Activated B cell treated with CpG ODN at 0.5 μM for 24 hours (primary cell): ENCODE measurements at regions of chr3 and their contacts with region 1.

Region 1: GRCh38 chr3:194315088-194315964 is 35.8 kb downstream of the CPN2 start:
- DNase-seq: peak; percentile 86
- ATAC-seq: peak; percentile 88
- H3K4me3 Mint-ChIP-seq: peak overlapping the region; percentile 77
- H3K27ac Mint-ChIP-seq: no peak overlapping the region
- H3K4me1 Mint-ChIP-seq: peaks cover 28% of the 10 kb centered on the region
- H3K27me3 Mint-ChIP-seq: peaks cover 25% of the 10 kb centered on the region
- CTCF ChIP-seq: peak; percentile 96

Region 2: GRCh38 chr3:193665370-193665989 is 649.8 kb before region 1 on chr3:
- CTCF ChIA-PET with region 1: interaction called, 132 read pairs
- POLR2A ChIA-PET with region 1: interaction called, 4 read pairs
- intact Hi-C with region 1: loop called (anchors 1 kb)
- DNase-seq: no peak
- ATAC-seq: no peak
- H3K4me3 Mint-ChIP-seq: no peak overlapping the region
- H3K27ac Mint-ChIP-seq: no peak overlapping the region
- H3K4me1 Mint-ChIP-seq: peaks cover 6% of the 10 kb centered on the region
- H3K27me3 Mint-ChIP-seq: no peaks in the 10 kb centered on the region
- CTCF ChIP-seq: peak; percentile 95

Region 3: GRCh38 chr3:193780810-193781472 is 534.4 kb before region 1 on chr3:
- CTCF ChIA-PET with region 1: interaction called, 97 read pairs
- POLR2A ChIA-PET with region 1: no interaction called
- intact Hi-C with region 1: loop called (anchors 1 kb)
- DNase-seq: no peak
- ATAC-seq: peak; percentile 42
- H3K4me3 Mint-ChIP-seq: no peak overlapping the region
- H3K27ac Mint-ChIP-seq: no peak overlapping the region
- H3K4me1 Mint-ChIP-seq: peaks cover 13% of the 10 kb centered on the region
- H3K27me3 Mint-ChIP-seq: peaks cover 34% of the 10 kb centered on the region
- CTCF ChIP-seq: no peak

Region 4: GRCh38 chr3:193788189-193788991 is 526.9 kb before region 1 on chr3:
- CTCF ChIA-PET with region 1: interaction called, 57 read pairs
- POLR2A ChIA-PET with region 1: interaction called, 5 read pairs
- intact Hi-C with region 1: loop called (anchors 1 kb)
- DNase-seq: peak; percentile 36
- ATAC-seq: peak; percentile 98
- H3K4me3 Mint-ChIP-seq: no peak overlapping the region
- H3K27ac Mint-ChIP-seq: peak overlapping the region; percentile 15
- H3K4me1 Mint-ChIP-seq: peaks cover 16% of the 10 kb centered on the region
- H3K27me3 Mint-ChIP-seq: peaks cover 25% of the 10 kb centered on the region
- CTCF ChIP-seq: peak; percentile 34

Region 5: GRCh38 chr3:193883551-193883950 is 431.8 kb before region 1 on chr3:
- CTCF ChIA-PET with region 1: no interaction called
- POLR2A ChIA-PET with region 1: no interaction called
- intact Hi-C with region 1: no loop called
- DNase-seq: no peak
- ATAC-seq: no peak
- H3K4me3 Mint-ChIP-seq: no peak overlapping the region
- H3K27ac Mint-ChIP-seq: no peak overlapping the region
- H3K4me1 Mint-ChIP-seq: peaks cover 16% of the 10 kb centered on the region
- H3K27me3 Mint-ChIP-seq: no peaks in the 10 kb centered on the region
- CTCF ChIP-seq: no peak

Region 6: DNA sequence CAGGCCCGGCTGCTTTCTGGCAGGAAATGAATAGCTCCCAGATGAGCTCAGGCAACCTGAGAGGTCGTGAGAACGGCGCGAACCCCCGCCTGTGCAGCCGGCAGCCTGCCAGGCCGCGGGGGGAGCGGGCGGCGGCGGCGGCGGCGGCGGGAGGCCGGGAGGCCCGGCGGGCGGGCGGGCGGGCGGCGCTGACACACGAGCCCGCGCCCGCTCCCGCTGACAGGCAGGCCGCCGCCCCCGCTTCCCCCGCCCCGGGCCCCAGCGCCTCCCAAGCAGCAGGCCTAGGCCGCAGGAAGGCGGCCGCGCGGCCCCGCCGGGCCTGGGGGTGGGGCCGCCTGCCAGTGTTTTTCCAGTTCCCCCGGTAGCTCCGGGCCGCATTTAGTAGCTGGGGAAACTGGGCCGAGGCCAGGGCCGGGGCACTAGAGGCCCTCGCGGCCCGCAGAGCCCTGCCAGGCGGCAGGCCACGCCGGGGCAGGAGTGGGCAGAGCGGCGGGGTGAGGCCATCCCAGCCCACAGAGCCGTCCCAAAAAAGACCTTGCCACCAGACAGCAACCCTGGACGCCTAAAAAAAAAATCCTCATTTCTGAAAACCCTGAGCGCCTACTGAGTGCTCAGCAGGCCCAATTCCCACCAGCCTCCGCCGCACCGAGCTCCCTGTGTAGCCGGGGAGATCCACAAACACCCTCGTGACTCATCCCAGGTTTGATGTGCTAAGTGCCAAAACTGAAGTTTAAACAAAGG is 173.7 kb before region 1 on chr3:
- CTCF ChIA-PET with region 1: interaction called, 77 read pairs
- POLR2A ChIA-PET with region 1: interaction called, 4 read pairs
- intact Hi-C with region 1: loop called (anchors 1 kb)
- DNase-seq: peak; percentile 50
- ATAC-seq: peak; percentile 27
- H3K4me3 Mint-ChIP-seq: peak overlapping the region; percentile 76
- H3K27ac Mint-ChIP-seq: peak overlapping the region; percentile 57
- H3K4me1 Mint-ChIP-seq: peaks cover 44% of the 10 kb centered on the region
- H3K27me3 Mint-ChIP-seq: peaks cover 6% of the 10 kb centered on the region
- CTCF ChIP-seq: no peak